ENCODE measurements at regions of chr5 and their contacts with region 1.

Region 1: DNA sequence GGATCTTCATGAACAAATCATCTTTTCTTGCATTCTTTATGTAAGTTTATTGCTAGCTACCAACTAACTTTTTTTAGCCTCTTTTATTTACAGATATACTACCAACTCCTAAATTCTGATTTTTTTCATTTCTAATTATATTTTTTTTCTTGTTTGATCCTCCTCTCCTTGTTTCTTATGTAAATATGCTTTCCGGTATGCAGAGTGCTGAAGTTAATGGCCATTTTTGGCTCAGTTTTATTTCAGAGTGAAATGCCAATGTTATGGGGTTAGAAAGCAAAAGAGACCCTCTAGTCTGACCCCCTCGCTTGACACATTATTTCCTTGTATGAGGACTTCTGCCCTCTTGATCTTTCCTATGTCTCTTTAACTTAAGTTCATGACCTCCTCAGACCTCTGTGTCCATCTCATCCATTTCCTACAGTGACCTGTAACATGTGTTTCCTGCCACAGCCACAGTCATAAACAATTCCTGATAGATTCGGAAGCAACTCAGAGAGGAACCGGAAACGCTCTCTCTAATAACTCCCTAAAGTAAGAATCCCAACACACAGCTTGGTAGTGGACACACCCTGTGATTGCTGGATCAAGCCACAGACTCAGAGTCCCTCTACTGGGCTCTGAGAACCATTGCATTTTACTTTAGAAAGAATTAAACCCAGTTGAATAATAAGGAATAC is 42.9 kb upstream of the AFAP1L1 start:
- DNase-seq: peak; percentile 79
- ATAC-seq: peak; percentile 97
- H3K4me3 ChIP-seq: no peak overlapping the region
- H3K27ac ChIP-seq: no peak overlapping the region
- H3K4me1 ChIP-seq: peaks cover 28% of the 10 kb centered on the region
- H3K27me3 ChIP-seq: no peaks in the 10 kb centered on the region
- CTCF ChIP-seq: peak; percentile 77
- EP300 ChIP-seq: no peak
- POLR2A ChIP-seq: no peak
- RAD21 ChIP-seq: peak; percentile 82

Region 2: GRCh38 chr5:149063017-149063687 is 165.6 kb before region 1 on chr5 and contains the start of gene SH3TC2:
- CTCF ChIA-PET with region 1: no interaction called
- POLR2A ChIA-PET with region 1: no interaction called
- in situ Hi-C with region 1: no loop called
- intact Hi-C with region 1: loop called (anchors 10 kb)
- DNase-seq: peak; percentile 90
- ATAC-seq: peak; percentile 99
- H3K4me3 ChIP-seq: peak within 1 kb of the TSS in 1 of 3 experiments; percentile 15; a peak in 1 of 6 replicates
- H3K27ac ChIP-seq: no peak within 1 kb of the TSS
- H3K4me1 ChIP-seq: peaks cover 40% of the 10 kb centered on the region
- H3K27me3 ChIP-seq: no peaks in the 10 kb centered on the region
- CTCF ChIP-seq: no peak
- EP300 ChIP-seq: no peak
- POLR2A ChIP-seq: no peak
- RAD21 ChIP-seq: no peak
- total RNA-seq, gene SH3TC2: 0.71 and 0.94 TPM in 2 replicates

Region 3: DNA sequence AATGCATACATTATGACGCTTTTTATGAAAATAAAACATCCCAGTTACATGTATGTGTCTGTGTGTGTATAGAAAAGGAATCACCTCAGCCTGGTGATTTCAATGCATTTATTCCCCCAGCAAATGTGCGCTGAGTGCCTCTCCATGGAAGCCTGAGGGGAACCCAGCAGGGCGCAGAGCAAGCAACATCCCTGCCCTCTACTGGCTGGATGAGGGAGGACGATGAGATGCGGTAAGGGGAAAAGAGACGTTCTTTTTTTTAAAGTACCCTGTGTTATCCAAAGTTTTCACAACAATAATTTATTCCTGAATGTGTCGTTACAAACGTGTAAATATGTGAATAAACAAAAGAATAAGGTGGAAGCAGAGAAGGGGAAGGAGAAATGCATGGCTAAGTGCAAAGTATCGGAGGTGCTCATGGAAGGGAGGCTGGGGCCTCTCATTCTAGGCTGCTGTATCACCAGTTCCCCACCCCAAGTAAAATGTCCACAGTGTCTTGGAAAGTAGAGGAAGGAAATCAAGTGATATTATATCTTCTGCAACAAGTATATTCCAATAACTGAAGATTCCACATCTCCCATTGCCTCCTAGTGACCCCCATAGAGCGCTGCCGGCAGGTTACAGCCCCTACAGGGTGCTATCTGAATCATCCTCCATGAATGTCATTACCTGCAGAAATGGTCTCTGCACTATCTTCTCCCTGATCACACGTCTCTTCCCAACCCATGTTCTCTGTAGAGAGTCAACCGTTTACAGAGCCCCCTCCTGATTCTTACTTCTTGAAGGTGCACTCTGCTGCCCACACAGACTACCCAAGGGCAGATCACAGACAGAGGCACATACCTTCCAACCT is 100.5 kb before region 1 on chr5:
- CTCF ChIA-PET with region 1: interaction called, 9 read pairs
- POLR2A ChIA-PET with region 1: no interaction called
- in situ Hi-C with region 1: no loop called
- intact Hi-C with region 1: loop called (anchors 1 kb)
- DNase-seq: no peak
- ATAC-seq: peak; percentile 93
- H3K4me3 ChIP-seq: no peak overlapping the region
- H3K27ac ChIP-seq: no peak overlapping the region
- H3K4me1 ChIP-seq: 0 out of 2 replicates have a peak, but pooled peaks cover 6% of the 10 kb centered on the region
- H3K27me3 ChIP-seq: 0 out of 5 replicates have a peak, but pooled peaks cover 0 to 5% of the 10 kb centered on the region in 2 experiments
- CTCF ChIP-seq: peak; percentile 68
- EP300 ChIP-seq: no peak
- POLR2A ChIP-seq: no peak
- RAD21 ChIP-seq: no peak

Region 4: GRCh38 chr5:149162401-149163084 is 66.2 kb before region 1 on chr5:
- CTCF ChIA-PET with region 1: no interaction called
- POLR2A ChIA-PET with region 1: interaction called, 10 read pairs
- in situ Hi-C with region 1: no loop called
- intact Hi-C with region 1: no loop called
- DNase-seq: peak; percentile 75
- ATAC-seq: peak; percentile 31; the same call in 2 of the 3 replicates
- H3K4me3 ChIP-seq: peak overlapping the region in 1 of 3 experiments; percentile 70; a peak in 2 of 6 replicates
- H3K27ac ChIP-seq: peak overlapping the region; percentile 87
- H3K4me1 ChIP-seq: peaks cover 64% of the 10 kb centered on the region
- H3K27me3 ChIP-seq: no peaks in the 10 kb centered on the region
- CTCF ChIP-seq: no peak
- EP300 ChIP-seq: peak in 1 of 2 experiments; percentile 19; a peak in 1 of 4 replicates
- POLR2A ChIP-seq: no peak
- RAD21 ChIP-seq: no peak

Region 5: DNA sequence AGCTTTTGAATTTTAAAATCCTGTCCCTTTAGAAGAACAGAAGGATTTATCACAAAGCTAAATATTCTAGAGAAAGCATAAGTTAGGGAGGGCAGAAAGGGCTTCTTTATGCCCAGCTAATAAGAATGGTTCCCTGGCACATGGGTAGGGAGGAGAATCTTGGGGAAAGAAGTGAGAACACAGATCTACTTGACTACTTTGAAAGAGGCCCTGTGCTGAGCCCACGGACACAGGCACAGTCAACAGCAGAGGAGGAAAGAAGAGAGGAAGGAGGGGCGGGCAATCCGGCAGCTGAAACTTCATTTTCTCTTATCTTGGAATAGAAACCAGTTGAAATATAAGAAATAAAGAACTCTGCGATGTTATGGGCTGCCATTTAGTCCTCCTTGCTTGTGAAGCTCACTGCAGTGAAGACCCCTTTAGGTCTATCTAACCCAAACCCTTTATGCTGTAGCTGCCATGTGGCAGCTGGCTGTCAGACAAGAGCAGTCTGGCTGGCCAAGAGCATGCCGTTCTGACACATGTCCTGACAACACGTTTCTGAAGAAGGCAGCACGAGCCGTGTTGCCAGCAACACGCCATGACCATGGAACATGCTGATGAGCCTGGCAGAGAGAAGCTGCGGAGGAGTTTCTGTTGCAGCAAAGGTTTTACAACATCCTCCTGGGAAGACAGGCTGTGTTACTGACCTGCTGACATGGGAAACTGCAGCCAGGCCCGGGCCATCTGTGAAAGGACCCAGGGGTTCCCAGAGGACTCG is 53.2 kb before region 1 on chr5:
- CTCF ChIA-PET with region 1: no interaction called
- POLR2A ChIA-PET with region 1: interaction called, 17 read pairs
- in situ Hi-C with region 1: no loop called
- intact Hi-C with region 1: loop called (anchors 2 kb)
- DNase-seq: no peak
- ATAC-seq: no peak
- H3K4me3 ChIP-seq: no peak overlapping the region
- H3K27ac ChIP-seq: peak overlapping the region; percentile 100
- H3K4me1 ChIP-seq: peaks cover 63% of the 10 kb centered on the region
- H3K27me3 ChIP-seq: no peaks in the 10 kb centered on the region
- CTCF ChIP-seq: no peak
- EP300 ChIP-seq: no peak
- POLR2A ChIP-seq: no peak
- RAD21 ChIP-seq: no peak

Region 6: DNA sequence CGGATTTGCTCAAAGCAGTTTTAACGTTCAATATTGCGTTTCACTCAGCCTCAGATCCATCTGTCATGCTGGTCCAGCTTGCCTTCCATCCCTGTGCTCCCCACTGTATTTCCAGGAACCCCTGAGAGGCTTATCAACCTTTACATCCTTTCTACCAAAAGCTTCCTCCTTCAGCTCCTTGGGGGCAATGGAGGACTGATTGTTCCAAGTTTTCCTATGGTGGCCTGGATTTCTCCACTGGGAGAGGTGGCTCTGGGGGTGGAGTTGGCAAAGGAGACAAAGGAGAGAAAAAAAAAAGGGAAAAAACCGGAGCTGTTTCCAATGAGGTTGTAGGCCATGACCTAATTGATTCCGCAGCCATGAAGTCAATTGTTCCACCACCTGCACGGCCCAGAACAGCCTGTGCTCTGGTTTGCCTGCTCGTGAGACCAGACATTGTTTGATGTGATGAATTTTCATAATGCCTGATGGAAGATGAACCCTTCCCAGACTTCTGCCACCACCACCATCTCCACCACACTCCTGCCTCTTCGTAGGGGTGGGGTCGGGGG is 33.3 kb before region 1 on chr5:
- CTCF ChIA-PET with region 1: no interaction called
- POLR2A ChIA-PET with region 1: no interaction called
- in situ Hi-C with region 1: no loop called
- intact Hi-C with region 1: loop called (anchors 5 kb)
- DNase-seq: no peak
- ATAC-seq: no peak
- H3K4me3 ChIP-seq: no peak overlapping the region
- H3K27ac ChIP-seq: no peak overlapping the region
- H3K4me1 ChIP-seq: peaks cover 13% of the 10 kb centered on the region
- H3K27me3 ChIP-seq: no peaks in the 10 kb centered on the region
- CTCF ChIP-seq: no peak
- EP300 ChIP-seq: no peak
- POLR2A ChIP-seq: no peak
- RAD21 ChIP-seq: no peak

Region 7: GRCh38 chr5:149212198-149212951 is 16.4 kb before region 1 on chr5:
- CTCF ChIA-PET with region 1: no interaction called
- POLR2A ChIA-PET with region 1: no interaction called
- in situ Hi-C with region 1: no loop called
- intact Hi-C with region 1: no loop called
- DNase-seq: no peak
- ATAC-seq: no peak
- H3K4me3 ChIP-seq: no peak overlapping the region
- H3K27ac ChIP-seq: no peak overlapping the region
- H3K4me1 ChIP-seq: peaks cover 10% of the 10 kb centered on the region
- H3K27me3 ChIP-seq: no peaks in the 10 kb centered on the region
- CTCF ChIP-seq: no peak
- EP300 ChIP-seq: no peak
- POLR2A ChIP-seq: no peak
- RAD21 ChIP-seq: no peak